T-cell (primary cell): ENCODE measurements at regions of chr20 and their contacts with region 1.

Region 1: GRCh38 chr20:5918856-5919625 is 31.3 kb downstream of the TRMT6 start:
- DNase-seq: peak in 1 of 35 experiments; percentile 35
- ATAC-seq: peak; percentile 58 to 93 (median 88)
- H3K4me3 ChIP-seq: no peak overlapping the region
- H3K4me3 Mint-ChIP-seq: no peak overlapping the region
- H3K27ac ChIP-seq: no peak overlapping the region
- H3K27ac Mint-ChIP-seq: peak overlapping the region; percentile 3 to 61
- H3K4me1 ChIP-seq: peaks cover 0 to 6% of the 10 kb centered on the region in 2 experiments
- H3K4me1 Mint-ChIP-seq: peaks cover 0 to 16% (median 16%) of the 10 kb centered on the region in 3 donors
- H3K27me3 ChIP-seq: peaks cover 3 to 4% of the 10 kb centered on the region in 2 experiments
- H3K27me3 Mint-ChIP-seq: peaks cover 20 to 25% of the 10 kb centered on the region in 2 donors

Region 2: DNA sequence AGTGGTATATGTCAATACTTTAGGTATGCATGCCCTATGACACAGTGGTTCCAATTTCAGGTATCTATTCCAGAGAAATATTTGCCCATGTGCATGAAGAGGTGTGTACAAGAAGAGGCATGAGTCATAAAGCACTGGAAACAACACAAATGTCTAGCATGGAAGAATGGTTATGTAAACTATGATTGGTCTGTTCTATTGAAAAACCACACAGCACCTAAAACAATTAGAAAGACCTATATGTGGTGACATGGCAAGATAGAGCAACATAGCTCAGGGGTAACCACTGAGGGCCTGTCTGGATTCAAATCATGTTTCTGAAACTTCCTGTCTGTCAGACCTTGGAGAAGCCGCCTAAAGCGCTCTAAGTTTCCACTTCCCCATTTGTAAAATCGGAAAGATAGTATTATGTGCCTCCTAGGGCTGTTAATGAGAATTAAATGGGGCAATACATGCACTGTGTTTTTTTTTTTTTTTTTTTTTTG is 244.8 kb before region 1 on chr20:
- CTCF ChIA-PET with region 1: no interaction called
- POLR2A ChIA-PET with region 1: no interaction called
- DNase-seq: peak in 1 of 35 experiments; percentile 13
- ATAC-seq: peak; percentile 51 to 64 (median 54)
- H3K4me3 ChIP-seq: no peak overlapping the region
- H3K4me3 Mint-ChIP-seq: no peak overlapping the region
- H3K27ac ChIP-seq: no peak overlapping the region
- H3K27ac Mint-ChIP-seq: peak overlapping the region; percentile 32 to 50
- H3K4me1 ChIP-seq: peaks cover 0 to 5% of the 10 kb centered on the region in 2 experiments
- H3K4me1 Mint-ChIP-seq: peaks cover 6 to 9% (median 8%) of the 10 kb centered on the region in 3 donors
- H3K27me3 ChIP-seq: peaks cover 0 to 5% of the 10 kb centered on the region in 2 experiments
- H3K27me3 Mint-ChIP-seq: no peaks in the 10 kb centered on the region

Region 3: DNA sequence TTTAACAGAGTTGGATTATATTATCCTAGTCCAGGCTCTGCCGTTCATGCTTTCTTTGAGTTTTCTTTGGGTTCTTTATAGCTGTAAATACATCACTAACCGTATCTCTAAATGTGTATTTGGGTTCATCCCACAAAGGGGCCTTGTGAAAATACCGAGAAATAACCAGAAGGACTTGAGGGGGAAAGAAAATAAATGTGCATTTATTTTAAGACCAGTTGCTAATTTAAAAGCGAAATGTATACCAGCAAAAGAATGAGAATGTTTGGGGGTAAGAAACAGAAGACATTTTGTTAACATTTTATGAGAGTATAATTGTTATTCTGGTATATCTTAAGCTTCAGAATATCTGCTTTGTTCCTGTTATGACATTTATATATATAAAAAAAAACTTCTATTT is 95.9 kb after region 1 on chr20:
- CTCF ChIA-PET with region 1: interaction called in 1 of 2 experiments, 11 read pairs
- POLR2A ChIA-PET with region 1: no interaction called
- DNase-seq: no peak
- ATAC-seq: no peak
- H3K4me3 ChIP-seq: no peak overlapping the region
- H3K4me3 Mint-ChIP-seq: no peak overlapping the region
- H3K27ac ChIP-seq: no peak overlapping the region
- H3K27ac Mint-ChIP-seq: no peak overlapping the region
- H3K4me1 ChIP-seq: peaks cover 0 to 2% of the 10 kb centered on the region in 2 experiments
- H3K4me1 Mint-ChIP-seq: peaks cover 52 to 56% (median 52%) of the 10 kb centered on the region in 3 donors
- H3K27me3 ChIP-seq: no peaks in the 10 kb centered on the region
- H3K27me3 Mint-ChIP-seq: no peaks in the 10 kb centered on the region